ENCODE measurements at regions of chr10 and their contacts with region 1.

Region 1: GRCh38 chr10:101818119-101818871 is at the start of gene OGA:
- DNase-seq: peak; percentile 95
- ATAC-seq: peak; percentile 92
- H3K4me3 Mint-ChIP-seq: peak within 1 kb of the TSS; percentile 96
- H3K27ac Mint-ChIP-seq: peak within 1 kb of the TSS; percentile 99
- H3K4me1 Mint-ChIP-seq: peaks cover 35% of the 10 kb centered on the region
- H3K27me3 Mint-ChIP-seq: no peaks in the 10 kb centered on the region
- total RNA-seq, gene OGA: 207 to 212 TPM

Region 2: DNA sequence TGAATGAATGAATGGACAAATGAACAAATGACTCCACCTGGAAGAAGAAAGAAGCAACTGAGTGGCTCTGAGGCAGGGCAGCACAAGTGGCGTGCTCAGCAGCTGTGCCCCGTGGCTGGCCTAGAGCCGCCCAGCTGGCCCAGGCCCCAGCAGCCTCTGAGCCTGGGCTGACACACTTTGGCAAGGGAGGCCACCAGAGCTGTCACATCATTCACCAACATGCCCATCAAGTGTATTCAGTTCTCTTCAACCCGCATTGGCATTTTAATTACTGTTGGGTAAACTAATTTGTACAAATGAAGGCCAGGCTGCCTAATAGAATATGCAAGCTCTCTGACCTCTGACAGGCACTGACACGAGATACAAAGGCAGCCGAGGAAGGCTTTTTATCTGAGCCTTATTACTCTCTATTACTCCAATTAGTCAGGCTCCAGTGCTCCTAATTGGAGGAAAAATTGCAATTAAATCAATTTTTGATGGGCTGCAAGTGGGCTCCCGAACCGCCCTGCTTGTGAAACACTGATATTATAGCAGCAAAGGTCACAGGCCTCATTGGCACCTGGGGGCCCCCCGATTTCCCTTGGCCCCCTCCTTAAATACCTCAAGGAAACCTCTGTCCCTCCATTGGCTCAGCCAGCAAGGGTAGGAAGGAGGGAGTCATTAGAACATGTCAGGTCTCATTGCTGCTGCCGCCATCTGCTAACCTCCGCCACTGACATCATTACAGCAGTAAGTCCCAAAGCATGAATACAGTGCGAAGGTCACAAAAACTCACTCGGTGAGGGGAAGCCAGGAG is 188.3 kb before region 1 on chr10:
- POLR2A ChIA-PET with region 1: no interaction called
- DNase-seq: no peak
- ATAC-seq: no peak
- H3K4me3 Mint-ChIP-seq: no peak overlapping the region
- H3K27ac Mint-ChIP-seq: peak overlapping the region; percentile 47
- H3K4me1 Mint-ChIP-seq: peaks cover 4% of the 10 kb centered on the region
- H3K27me3 Mint-ChIP-seq: no peaks in the 10 kb centered on the region

Region 3: GRCh38 chr10:101782811-101783735 is 35.2 kb before region 1 on chr10 and contains the start of gene NPM3:
- POLR2A ChIA-PET with region 1: interaction called, 22 read pairs
- DNase-seq: peak; percentile 84
- ATAC-seq: peak; percentile 83
- H3K4me3 Mint-ChIP-seq: peak within 1 kb of the TSS; percentile 99
- H3K27ac Mint-ChIP-seq: peak within 1 kb of the TSS; percentile 97
- H3K4me1 Mint-ChIP-seq: peaks cover 39% of the 10 kb centered on the region
- H3K27me3 Mint-ChIP-seq: peaks cover 9% of the 10 kb centered on the region
- total RNA-seq, gene NPM3: 29.2 to 30.5 TPM

Region 4: GRCh38 chr10:101830322-101831168 is 12.2 kb after region 1 on chr10:
- POLR2A ChIA-PET with region 1: interaction called, 69 read pairs
- DNase-seq: peak; percentile 89
- ATAC-seq: peak; percentile 79
- H3K4me3 Mint-ChIP-seq: peak overlapping the region; percentile 85
- H3K27ac Mint-ChIP-seq: peak overlapping the region; percentile 95
- H3K4me1 Mint-ChIP-seq: peaks cover 48% of the 10 kb centered on the region
- H3K27me3 Mint-ChIP-seq: no peaks in the 10 kb centered on the region

Region 5: GRCh38 chr10:101840741-101841453 is 22.6 kb after region 1 on chr10:
- POLR2A ChIA-PET with region 1: interaction called, 28 read pairs
- DNase-seq: peak; percentile 85
- ATAC-seq: peak; percentile 66
- H3K4me3 Mint-ChIP-seq: peak overlapping the region; percentile 89
- H3K27ac Mint-ChIP-seq: no peak overlapping the region
- H3K4me1 Mint-ChIP-seq: peaks cover 33% of the 10 kb centered on the region
- H3K27me3 Mint-ChIP-seq: peaks cover 21% of the 10 kb centered on the region

Region 6: DNA sequence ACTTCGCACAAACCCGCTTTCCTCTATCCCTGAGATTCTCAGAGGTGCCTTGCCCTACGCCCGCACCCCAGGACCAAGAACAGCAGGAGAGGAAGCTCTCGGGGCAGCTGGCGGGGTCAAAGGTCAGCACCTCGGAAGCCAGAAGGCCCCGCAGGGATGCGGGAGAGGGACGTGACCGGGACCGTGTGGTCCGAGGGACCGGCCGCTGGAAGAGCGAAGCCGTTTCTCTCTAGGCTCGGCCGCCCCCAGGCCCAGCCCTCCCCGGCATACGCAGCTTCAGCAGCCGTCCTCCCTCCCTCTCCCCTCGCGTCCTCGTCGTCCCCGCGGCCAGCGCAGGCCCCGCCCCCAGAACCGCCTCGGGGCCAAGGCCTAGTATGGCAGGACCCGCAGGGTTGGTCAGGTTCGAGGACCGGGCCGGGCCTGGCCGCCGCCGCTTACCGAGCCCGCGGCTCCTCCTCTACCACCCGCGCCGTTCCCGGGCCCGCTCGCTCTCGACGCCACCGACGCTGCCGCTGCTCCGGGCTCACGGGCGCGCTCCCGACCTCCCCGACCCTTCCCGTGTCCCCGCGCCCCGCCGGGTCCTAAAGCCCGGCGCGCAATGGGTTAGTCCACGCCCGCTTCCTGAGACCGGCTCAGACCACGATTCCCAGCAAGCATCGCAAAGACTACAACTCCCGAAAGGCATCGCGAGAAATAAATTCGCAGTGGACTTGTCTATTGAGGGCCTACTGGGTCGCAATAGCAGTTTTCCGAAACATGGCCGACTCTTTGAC is 237.5 kb after region 1 on chr10 and contains the start of gene ARMH3:
- POLR2A ChIA-PET with region 1: interaction called, 10 read pairs
- DNase-seq: peak; percentile 90
- ATAC-seq: peak; percentile 97
- H3K4me3 Mint-ChIP-seq: peak within 1 kb of the TSS; percentile 95
- H3K27ac Mint-ChIP-seq: peak within 1 kb of the TSS; percentile 97
- H3K4me1 Mint-ChIP-seq: peaks cover 26% of the 10 kb centered on the region
- H3K27me3 Mint-ChIP-seq: no peaks in the 10 kb centered on the region
- total RNA-seq, gene ARMH3: 27.8 to 30.5 TPM

Region 7: DNA sequence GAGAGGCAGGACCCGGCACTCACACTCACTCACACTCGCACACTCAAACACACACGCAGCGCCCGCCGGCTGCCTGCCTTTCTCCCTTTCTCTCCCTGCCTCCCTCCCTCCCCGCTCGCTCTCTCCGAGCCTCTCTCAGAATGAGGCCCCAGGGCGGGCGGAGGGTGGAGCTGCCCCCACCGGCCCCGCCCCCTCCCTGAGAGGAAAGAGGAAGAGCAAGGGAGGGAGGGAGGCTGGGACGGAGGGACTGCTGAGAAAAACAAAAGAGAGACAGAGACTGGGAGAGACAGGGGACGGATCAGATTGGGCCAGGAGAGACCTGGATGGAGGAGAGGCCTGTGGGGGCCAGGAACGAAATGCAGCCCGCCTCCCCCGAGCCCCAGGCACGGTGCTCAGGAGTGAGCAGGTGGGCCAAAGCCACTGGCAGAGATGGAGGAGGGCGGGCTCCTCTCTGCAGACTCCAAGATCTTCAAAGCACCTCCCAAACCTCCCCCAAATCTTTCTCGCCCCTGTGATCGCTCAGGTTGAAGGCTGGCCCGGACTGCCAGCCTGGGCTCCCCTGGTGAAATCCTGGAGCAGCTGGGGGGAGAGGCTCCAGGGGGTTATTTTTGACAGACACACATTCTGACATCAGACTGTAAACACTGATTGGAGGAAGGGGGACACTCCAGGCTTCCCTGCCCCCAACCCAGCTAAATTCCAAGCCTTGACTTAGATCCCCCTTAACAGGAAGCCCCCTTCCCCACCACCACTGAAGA is 296.7 kb after region 1 on chr10:
- POLR2A ChIA-PET with region 1: interaction called, 20 read pairs
- DNase-seq: peak; percentile 84
- ATAC-seq: peak; percentile 60
- H3K4me3 Mint-ChIP-seq: peak overlapping the region; percentile 88
- H3K27ac Mint-ChIP-seq: peak overlapping the region; percentile 92
- H3K4me1 Mint-ChIP-seq: peaks cover 49% of the 10 kb centered on the region
- H3K27me3 Mint-ChIP-seq: no peaks in the 10 kb centered on the region

Region 8: GRCh38 chr10:102151774-102152544 is 333.7 kb after region 1 on chr10 and contains the start of gene NOLC1:
- POLR2A ChIA-PET with region 1: interaction called, 13 read pairs
- DNase-seq: peak; percentile 99
- ATAC-seq: peak; percentile 97
- H3K4me3 Mint-ChIP-seq: peak within 1 kb of the TSS; percentile 88
- H3K27ac Mint-ChIP-seq: peak within 1 kb of the TSS; percentile 86
- H3K4me1 Mint-ChIP-seq: peaks cover 26% of the 10 kb centered on the region
- H3K27me3 Mint-ChIP-seq: no peaks in the 10 kb centered on the region
- total RNA-seq, gene NOLC1: 73.8 to 78.3 TPM

Measured in activated naive CD8-positive, alpha-beta T cell treated with anti-CD3 and anti-CD28 coated beads, Interleukin-2, amount 10 ng/mL, durations not matched to agents 7 days and 5 days (primary cell).